ENCODE measurements at regions of chr10 and their contacts with region 1.

Region 1: GRCh38 chr10:72273410-72274212 is at the start of gene DDIT4:
- H3K4me3 ChIP-seq: peak within 1 kb of the TSS; percentile 65
- H3K27ac ChIP-seq: peak within 1 kb of the TSS; percentile 99
- H3K4me1 ChIP-seq: peaks cover 7% of the 10 kb centered on the region
- CTCF ChIP-seq: peak; percentile 41; the same call in 1 of the 2 replicates

Region 2: DNA sequence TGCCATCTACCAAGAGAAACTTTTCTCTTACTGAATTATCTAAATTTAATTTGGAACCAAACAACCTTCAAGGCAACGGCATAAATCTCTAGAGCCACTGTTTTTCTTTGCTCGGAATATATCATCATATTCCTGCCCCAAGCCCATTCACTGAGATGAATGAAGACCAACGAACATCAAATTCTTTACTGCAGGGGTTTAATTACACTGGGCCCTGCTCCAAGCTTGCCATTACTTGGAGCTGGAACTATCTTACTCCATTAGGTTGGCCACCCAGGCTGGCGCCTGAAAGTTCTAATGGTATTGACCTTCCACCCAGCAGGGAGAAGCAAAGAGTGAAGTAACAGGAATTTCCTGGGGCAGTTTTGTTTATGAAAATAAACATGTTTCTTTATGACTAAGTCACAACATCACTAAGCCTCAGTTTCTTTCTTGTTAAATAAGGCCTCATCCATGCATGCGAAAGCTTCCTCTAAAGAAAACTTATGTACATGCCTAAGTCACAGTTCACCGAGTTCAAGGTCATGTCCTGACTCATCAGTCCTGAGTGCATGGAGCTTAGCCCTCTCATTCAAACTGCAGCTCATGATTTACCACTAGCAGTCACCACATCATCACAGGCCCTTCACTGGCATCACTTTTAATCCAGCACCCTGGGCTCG is 99.8 kb before region 1 on chr10:
- CTCF ChIA-PET with region 1: no interaction called
- POLR2A ChIA-PET with region 1: interaction called, 16 read pairs
- H3K4me3 ChIP-seq: no peak overlapping the region
- H3K27ac ChIP-seq: peak overlapping the region; percentile 81
- H3K4me1 ChIP-seq: peaks cover 17% of the 10 kb centered on the region
- CTCF ChIP-seq: no peak

Region 3: GRCh38 chr10:72229261-72230251 is 44.1 kb before region 1 on chr10:
- CTCF ChIA-PET with region 1: interaction called, 6 read pairs
- POLR2A ChIA-PET with region 1: interaction called, 18 read pairs
- H3K4me3 ChIP-seq: no peak overlapping the region
- H3K27ac ChIP-seq: 0 out of 2 replicates have a peak overlapping the region, but pooled peaks have one; percentile 1
- H3K4me1 ChIP-seq: peaks cover 26% of the 10 kb centered on the region
- CTCF ChIP-seq: no peak

Region 4: DNA sequence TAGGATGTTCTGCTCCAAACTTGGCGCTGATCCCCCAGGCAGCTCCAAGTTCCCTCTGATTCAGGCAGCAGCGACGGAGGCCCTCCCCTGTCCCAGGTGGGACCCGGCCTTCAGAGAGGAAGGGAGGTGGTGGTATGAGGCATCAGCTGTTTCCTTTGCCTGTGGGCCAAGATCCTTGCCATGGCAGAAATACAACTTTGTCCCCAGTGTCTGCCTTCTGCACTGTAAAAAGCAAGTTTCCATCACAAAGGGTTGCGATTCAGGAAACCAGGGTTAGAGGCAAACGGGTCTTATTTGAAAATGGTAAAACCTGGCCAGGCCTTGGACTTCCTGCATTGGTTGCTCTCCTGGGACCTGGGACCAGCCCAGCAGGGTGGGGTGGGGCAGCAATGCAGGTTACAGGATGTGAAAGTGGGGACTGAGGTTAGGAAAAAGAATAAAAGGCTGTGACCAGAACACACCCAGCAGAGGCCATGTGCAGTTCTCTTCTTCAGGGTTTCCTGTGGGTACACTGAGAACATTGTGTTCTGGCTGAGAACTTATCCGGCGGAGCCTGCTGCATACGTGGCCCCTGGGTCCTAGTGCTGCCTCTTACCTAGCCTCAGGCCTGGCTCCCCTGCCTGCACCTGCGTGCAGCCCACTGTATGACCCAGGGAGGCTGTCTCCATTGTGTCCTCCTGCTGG is 25.0 kb before region 1 on chr10:
- CTCF ChIA-PET with region 1: interaction called, 11 read pairs
- POLR2A ChIA-PET with region 1: interaction called, 11 read pairs
- H3K4me3 ChIP-seq: no peak overlapping the region
- H3K27ac ChIP-seq: peak overlapping the region; percentile 71
- H3K4me1 ChIP-seq: peaks cover 20% of the 10 kb centered on the region
- CTCF ChIP-seq: no peak

Region 5: GRCh38 chr10:72260588-72261322 is 12.9 kb before region 1 on chr10:
- CTCF ChIA-PET with region 1: interaction called, 27 read pairs
- POLR2A ChIA-PET with region 1: interaction called, 120 read pairs
- H3K4me3 ChIP-seq: peak overlapping the region; percentile 56
- H3K27ac ChIP-seq: peak overlapping the region; percentile 97
- H3K4me1 ChIP-seq: peaks cover 24% of the 10 kb centered on the region
- CTCF ChIP-seq: peak; percentile 70

Region 6: GRCh38 chr10:72297968-72298773 is 24.6 kb after region 1 on chr10:
- CTCF ChIA-PET with region 1: interaction called, 6 read pairs
- POLR2A ChIA-PET with region 1: interaction called, 31 read pairs
- H3K4me3 ChIP-seq: peak overlapping the region; percentile 45
- H3K27ac ChIP-seq: peak overlapping the region; percentile 64; the same call in 1 of the 2 replicates
- H3K4me1 ChIP-seq: no peaks in the 10 kb centered on the region; the same call in 1 of the 2 replicates
- CTCF ChIP-seq: no peak

Region 7: DNA sequence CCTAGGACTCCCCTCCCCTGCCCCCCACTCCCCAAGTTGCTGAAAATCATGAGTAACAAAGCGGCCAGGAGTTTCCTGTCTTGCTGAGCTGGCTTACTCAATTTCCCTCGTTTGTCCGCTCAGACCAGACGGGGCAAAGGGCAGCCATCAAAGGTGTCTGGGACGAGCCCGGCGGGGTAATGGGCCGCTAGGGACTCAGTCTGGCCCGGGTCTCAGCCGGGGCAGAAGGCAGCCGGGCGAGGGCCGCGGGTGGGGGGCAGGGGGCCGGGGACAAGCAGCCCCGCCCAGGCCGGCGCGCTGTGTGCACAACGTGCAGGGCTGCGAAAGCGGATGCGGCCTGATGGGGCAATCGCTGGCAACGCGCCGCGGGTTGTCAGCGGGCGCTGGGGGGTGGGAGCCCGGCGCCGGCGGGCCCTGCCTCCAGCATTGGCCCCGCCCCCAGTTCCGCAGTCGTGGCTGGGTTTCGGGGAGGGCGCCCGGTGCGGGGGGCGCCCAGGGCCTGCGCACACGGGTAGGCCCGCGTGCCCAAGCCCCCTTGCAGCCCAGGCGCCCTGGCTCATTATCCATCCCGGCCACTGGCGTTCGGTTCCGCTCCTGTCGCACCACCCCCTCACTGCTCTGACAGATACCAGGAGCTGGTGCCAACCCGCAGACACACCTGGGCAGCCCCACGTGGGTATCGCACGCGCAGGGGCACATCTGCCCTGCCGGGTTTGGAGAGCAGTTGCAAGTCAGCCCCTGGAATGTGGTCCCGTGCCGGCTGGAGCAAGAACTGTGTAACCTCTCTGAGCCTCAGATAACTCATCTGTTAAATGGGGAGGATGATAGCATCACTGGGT is 46.0 kb after region 1 on chr10:
- CTCF ChIA-PET with region 1: interaction called, 7 read pairs
- POLR2A ChIA-PET with region 1: interaction called, 110 read pairs
- H3K4me3 ChIP-seq: no peak overlapping the region
- H3K27ac ChIP-seq: peak overlapping the region; percentile 77
- H3K4me1 ChIP-seq: peaks cover 23% of the 10 kb centered on the region
- CTCF ChIP-seq: peak; percentile 37; the same call in 1 of the 2 replicates

Measured in HEK293 (cell line).